PC-3 (cell line): ENCODE measurements at regions of chr12 and their contacts with region 1.

Region 1: DNA sequence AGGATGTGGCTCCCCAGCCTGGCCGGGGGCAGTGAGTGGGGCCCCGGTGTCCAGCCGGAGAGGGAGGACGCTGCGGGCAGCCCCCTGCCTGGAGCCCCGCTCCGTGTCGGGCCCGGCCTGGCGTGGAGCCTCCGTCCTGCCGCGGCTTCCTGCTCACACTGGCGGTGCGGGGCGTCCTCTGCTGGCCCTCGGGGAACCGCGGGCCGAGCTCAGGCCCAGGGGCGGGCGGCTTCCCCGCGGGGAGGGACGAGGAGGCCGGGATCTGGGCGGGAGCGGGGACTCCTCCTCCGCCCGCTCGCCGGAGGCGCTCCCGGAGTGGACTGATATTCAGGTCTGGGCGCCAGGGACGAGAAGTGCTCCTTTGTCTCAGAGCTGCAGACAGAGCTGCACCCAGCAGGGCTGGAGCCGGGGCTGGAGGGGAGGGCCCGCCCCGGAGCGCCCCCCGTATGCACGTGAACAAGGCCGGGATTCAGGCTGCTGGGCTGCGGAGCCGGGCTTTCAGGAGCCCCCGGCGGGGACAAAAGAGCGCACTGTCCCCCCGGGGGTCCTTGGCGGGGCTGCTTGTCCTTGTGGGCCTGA is 2.2 kb downstream of the MMP17 start:
- DNase-seq: peak; percentile 91
- ATAC-seq: peak; percentile 63
- H3K4me3 ChIP-seq: peak overlapping the region; percentile 85
- H3K27ac ChIP-seq: peak overlapping the region; percentile 63
- H3K4me1 ChIP-seq: peaks cover 25% of the 10 kb centered on the region
- H3K27me3 ChIP-seq: no peaks in the 10 kb centered on the region
- CTCF ChIP-seq: peak; percentile 68

Region 2: GRCh38 chr12:130761537-130762318 is 1068.7 kb before region 1 on chr12:
- CTCF ChIA-PET with region 1: no interaction called
- POLR2A ChIA-PET with region 1: no interaction called
- intact Hi-C with region 1: loop called (anchors 5 kb)
- DNase-seq: peak; percentile 92
- ATAC-seq: peak; percentile 96
- H3K4me3 ChIP-seq: peak overlapping the region; percentile 67
- H3K27ac ChIP-seq: no peak overlapping the region
- H3K4me1 ChIP-seq: peaks cover 8% of the 10 kb centered on the region; the same call in 1 of the 2 replicates
- H3K27me3 ChIP-seq: peaks cover 3% of the 10 kb centered on the region; the same call in 1 of the 2 replicates
- CTCF ChIP-seq: peak; percentile 98

Region 3: DNA sequence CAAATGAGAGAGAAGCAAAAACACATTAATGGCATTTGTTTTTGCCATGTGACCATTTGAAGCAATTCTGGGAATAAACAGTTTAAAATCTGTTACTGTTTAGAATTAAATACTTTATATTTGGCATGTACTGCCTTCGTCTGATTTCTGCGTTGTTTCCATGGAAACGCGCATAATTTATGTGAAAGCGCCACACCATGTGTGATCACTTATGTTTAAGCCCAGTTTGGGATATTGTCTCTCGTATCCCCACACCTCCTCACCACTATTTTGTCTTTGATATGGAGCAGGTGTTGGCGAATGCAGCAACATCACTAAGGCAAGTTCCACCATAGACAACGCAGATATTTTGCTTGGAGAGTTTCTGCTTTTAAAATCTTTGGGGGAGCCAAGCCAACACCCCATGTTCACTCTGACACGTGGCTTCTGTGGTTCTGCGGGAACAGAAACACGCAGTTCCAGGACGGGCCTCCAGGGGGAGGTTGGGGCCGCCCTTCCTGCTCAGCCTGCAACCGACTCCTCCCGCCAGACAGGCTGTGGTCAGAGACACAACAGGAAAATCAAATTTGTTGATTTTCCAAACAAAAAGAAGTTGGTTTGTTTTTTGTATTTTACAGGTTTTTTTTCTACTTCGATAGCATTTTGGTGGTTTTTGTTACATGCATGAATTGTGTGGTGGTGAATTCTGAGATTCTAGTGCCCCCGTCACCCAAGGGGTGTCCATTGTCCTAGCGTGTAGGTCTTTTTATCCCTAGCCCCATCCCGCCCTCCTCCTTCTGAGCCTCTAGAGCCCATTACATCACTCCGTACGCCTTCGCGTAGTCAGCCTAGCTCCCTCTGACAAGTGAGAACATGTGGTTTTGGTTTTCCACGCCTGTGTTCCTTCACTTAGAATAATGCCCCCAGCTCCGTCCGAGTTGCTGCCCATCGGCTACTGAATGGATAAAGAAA is 221.4 kb before region 1 on chr12:
- CTCF ChIA-PET with region 1: no interaction called
- POLR2A ChIA-PET with region 1: no interaction called
- intact Hi-C with region 1: loop called (anchors 5 kb)
- DNase-seq: peak; percentile 68
- ATAC-seq: peak; percentile 94
- H3K4me3 ChIP-seq: no peak overlapping the region
- H3K27ac ChIP-seq: no peak overlapping the region
- H3K4me1 ChIP-seq: no peaks in the 10 kb centered on the region
- H3K27me3 ChIP-seq: peaks cover 79% of the 10 kb centered on the region
- CTCF ChIP-seq: peak; percentile 88

Region 4: GRCh38 chr12:131737142-131737827 is 93.1 kb before region 1 on chr12:
- CTCF ChIA-PET with region 1: no interaction called
- POLR2A ChIA-PET with region 1: no interaction called
- intact Hi-C with region 1: loop called (anchors 5 kb)
- DNase-seq: peak; percentile 98
- ATAC-seq: peak; percentile 98
- H3K4me3 ChIP-seq: peak overlapping the region; percentile 62
- H3K27ac ChIP-seq: peak overlapping the region; percentile 70
- H3K4me1 ChIP-seq: peaks cover 29% of the 10 kb centered on the region
- H3K27me3 ChIP-seq: no peaks in the 10 kb centered on the region
- CTCF ChIP-seq: no peak

Region 5: GRCh38 chr12:131783915-131784541 is 46.4 kb before region 1 on chr12:
- CTCF ChIA-PET with region 1: no interaction called
- POLR2A ChIA-PET with region 1: no interaction called
- intact Hi-C with region 1: loop called (anchors 2 kb)
- DNase-seq: peak; percentile 84
- ATAC-seq: peak; percentile 86
- H3K4me3 ChIP-seq: peak overlapping the region; percentile 33
- H3K27ac ChIP-seq: peak overlapping the region; percentile 78
- H3K4me1 ChIP-seq: peaks cover 25% of the 10 kb centered on the region
- H3K27me3 ChIP-seq: no peaks in the 10 kb centered on the region
- CTCF ChIP-seq: no peak

Region 6: DNA sequence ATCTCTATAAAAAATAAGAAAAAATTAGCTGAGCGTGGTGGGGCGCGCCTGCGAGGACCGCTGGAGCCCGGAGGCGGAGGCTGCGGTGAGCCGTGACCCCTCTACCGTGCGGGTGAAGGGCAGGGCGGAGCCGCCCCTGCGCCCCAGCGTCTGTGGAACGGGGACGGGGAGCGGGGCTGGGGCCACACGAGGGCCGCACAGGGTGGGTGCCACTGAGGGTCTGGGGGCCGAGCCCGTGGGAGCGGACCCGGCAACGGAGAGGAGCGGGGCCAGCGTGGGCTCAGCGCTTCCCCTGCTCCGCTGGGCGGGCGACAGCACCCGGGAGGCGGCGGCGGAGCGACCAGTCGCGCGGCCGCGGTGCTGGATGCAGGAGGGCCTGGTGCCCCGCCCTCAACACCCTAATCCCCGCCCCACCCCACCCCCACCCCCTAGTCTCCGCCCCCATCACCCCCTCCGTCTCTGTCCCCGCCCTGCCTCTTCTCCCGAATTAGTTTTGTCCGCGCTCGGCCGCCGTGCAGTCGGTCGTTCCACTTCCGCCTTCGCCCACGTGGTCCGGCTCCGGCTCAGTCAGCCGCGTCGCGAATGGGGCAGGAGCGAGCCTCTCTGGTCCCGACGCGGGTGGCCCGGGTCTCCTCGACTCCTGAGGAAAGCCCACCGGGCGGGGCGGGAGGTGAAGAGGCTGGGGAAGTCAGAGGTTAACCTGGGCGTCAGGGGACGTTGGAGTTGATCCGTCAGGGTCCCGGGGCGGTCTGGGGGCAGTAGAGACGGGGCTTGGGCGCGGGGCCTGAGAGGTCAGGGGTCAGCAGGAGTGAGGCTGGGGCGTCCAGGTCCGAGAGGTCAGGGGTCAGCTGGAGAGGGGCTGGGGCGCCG is 98.5 kb after region 1 on chr12 and contains the start of gene PUS1:
- CTCF ChIA-PET with region 1: no interaction called
- POLR2A ChIA-PET with region 1: no interaction called
- intact Hi-C with region 1: loop called (anchors 5 kb)
- DNase-seq: peak; percentile 96
- ATAC-seq: peak; percentile 83
- H3K4me3 ChIP-seq: peak within 1 kb of the TSS; percentile 90
- H3K27ac ChIP-seq: peak within 1 kb of the TSS; percentile 81
- H3K4me1 ChIP-seq: peaks cover 14% of the 10 kb centered on the region
- H3K27me3 ChIP-seq: no peaks in the 10 kb centered on the region
- CTCF ChIP-seq: no peak
- total RNA-seq, gene PUS1: 74.0 TPM in 2 replicates